ENCODE measurements at regions of chr12 and their contacts with region 1.

Region 1: DNA sequence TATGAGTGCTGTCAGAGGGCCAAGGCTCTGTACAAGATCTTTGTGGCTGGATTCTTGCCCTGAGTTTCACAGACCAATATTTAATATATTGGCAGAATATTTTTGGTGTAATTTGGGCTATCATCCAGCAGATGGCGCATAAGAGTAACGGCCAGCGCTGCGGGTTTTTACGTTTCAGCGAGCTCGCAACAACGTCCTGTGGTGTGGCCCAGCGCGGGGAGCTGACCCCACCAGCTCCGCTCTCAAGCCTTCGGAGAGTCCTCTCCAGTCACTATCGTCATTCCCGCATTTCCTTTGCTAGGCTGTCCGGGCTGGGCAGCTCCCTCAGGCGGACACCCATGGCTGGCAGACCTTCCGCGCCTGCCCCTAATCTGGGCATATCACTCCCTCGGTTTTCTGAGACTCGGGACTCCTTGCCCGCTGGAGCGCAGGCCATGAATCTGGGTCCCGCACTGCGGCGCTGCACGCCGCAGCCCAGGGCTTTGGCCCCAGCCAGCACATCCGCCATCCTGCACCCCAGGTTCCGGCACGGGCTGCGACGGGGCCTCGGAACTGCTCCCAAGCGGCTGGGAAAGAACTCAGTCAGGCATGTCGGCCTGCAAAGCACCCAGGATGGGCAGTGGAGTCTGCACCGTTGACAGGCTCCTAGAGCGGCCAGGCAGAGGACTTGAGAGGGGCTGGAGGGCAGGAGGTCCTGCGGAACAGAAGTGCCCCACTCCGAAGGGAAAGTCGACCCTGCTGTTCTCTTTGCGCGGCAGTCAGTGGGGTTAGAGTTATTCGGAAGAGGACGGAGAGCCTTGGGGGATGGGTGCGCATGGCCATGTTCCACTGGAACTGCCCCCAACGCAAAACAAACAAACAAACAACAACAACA is 18.4 kb downstream of the OLR1 start:
- DNase-seq: peak; percentile 64
- H3K4me3 ChIP-seq: peak overlapping the region; percentile 32 to 60 (median 39)
- H3K27ac ChIP-seq: peak overlapping the region; percentile 70 to 77 (median 72)
- H3K4me1 ChIP-seq: peaks cover 0 to 10% (median 7%) of the 10 kb centered on the region in 4 donors
- H3K27me3 ChIP-seq: no peaks in the 10 kb centered on the region
- CTCF ChIP-seq: peak; percentile 80 to 89 (median 82)
- EP300 ChIP-seq: no peak
- POLR2A ChIP-seq: peak; percentile 17

Region 2: GRCh38 chr12:10190558-10191388 is 37.3 kb after region 1 on chr12:
- in situ Hi-C with region 1: loop called in 2 of 4 experiments (anchors 5 kb)
- intact Hi-C with region 1: loop called (anchors 2 kb)
- DNase-seq: peak; percentile 67
- H3K4me3 ChIP-seq: no peak overlapping the region
- H3K27ac ChIP-seq: no peak overlapping the region
- H3K4me1 ChIP-seq: no peaks in the 10 kb centered on the region
- H3K27me3 ChIP-seq: peaks cover 4% of the 10 kb centered on the region
- CTCF ChIP-seq: peak; percentile 70 to 76 (median 73)
- EP300 ChIP-seq: no peak
- POLR2A ChIP-seq: no peak

Region 3: DNA sequence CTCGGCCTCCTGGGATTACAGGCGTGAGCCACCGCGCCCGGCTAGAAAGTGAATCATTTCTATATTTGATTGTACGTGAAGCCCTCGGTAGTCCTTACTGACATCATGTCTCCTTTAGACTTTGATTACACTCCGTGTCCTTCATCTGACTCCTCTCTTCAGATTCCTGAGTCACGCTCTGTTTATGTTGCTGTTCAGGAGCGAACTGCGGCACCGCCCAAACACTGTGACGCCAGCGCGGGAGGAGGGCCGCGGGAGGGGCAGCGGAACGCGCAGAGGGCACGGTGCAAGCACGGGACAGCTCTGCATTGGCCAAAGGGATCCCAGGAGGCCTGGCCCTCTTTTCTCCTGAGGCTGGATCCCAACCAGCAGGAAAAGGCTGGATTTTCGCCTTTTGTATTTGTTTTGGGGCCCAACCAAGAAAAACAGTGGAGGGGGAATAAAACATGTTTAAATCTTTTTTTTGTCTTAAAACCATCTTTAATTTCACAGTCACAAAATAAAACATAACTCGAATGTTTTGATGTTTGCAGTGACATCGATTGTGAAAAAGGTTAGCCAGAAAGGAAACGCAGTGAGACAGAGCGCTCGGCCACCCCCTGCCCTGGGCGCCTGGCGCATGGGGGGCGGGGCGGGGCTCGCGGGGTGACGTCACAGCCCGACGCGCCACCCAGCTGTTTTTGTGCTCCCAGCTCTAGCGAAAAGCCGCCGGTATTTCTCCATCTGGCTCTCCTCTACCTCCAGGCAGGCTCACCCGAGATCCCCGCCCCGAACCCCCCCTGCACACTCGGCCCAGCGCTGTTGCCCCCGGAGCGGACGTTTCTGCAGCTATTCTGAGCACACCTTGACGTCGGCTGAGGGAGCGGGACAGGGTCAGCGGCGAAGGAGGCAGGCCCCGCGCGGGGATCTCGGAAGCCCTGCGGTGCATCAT is 59.0 kb after region 1 on chr12 and contains the start of gene GABARAPL1:
- in situ Hi-C with region 1: no loop called
- intact Hi-C with region 1: no loop called
- DNase-seq: peak; percentile 98
- H3K4me3 ChIP-seq: peak within 1 kb of the TSS; percentile 63 to 84 (median 70)
- H3K27ac ChIP-seq: peak within 1 kb of the TSS; percentile 97 to 98 (median 98)
- H3K4me1 ChIP-seq: peaks cover 0 to 25% (median 18%) of the 10 kb centered on the region in 4 donors
- H3K27me3 ChIP-seq: no peaks in the 10 kb centered on the region
- CTCF ChIP-seq: peak in 1 of 5 experiments; percentile 18
- EP300 ChIP-seq: peak; percentile 95
- POLR2A ChIP-seq: peak; percentile 88
- total RNA-seq, gene GABARAPL1: 33.6 to 65.3 (median 59.5) TPM

Region 4: GRCh38 chr12:10227648-10228047 is 74.1 kb after region 1 on chr12:
- in situ Hi-C with region 1: no loop called
- intact Hi-C with region 1: no loop called
- DNase-seq: no peak
- H3K4me3 ChIP-seq: no peak overlapping the region
- H3K27ac ChIP-seq: no peak overlapping the region
- H3K4me1 ChIP-seq: no peaks in the 10 kb centered on the region
- H3K27me3 ChIP-seq: no peaks in the 10 kb centered on the region
- CTCF ChIP-seq: no peak
- EP300 ChIP-seq: no peak
- POLR2A ChIP-seq: no peak